ENCODE measurements at regions of chr15 and their contacts with region 1.

Region 1: GRCh38 chr15:52139599-52140491 is 27.3 kb upstream of the BCL2L10 start:
- DNase-seq: peak; percentile 80
- H3K4me3 Mint-ChIP-seq: no peak overlapping the region
- H3K27ac Mint-ChIP-seq: peak overlapping the region; percentile 91
- H3K4me1 Mint-ChIP-seq: peaks cover 23% of the 10 kb centered on the region
- H3K27me3 Mint-ChIP-seq: no peaks in the 10 kb centered on the region
- CTCF ChIP-seq: peak; percentile 83

Region 2: GRCh38 chr15:52093539-52094502 is 46.0 kb before region 1 on chr15:
- CTCF ChIA-PET with region 1: interaction called, 29 read pairs
- POLR2A ChIA-PET with region 1: interaction called, 5 read pairs
- intact Hi-C with region 1: loop called (anchors 2 kb)
- DNase-seq: peak; percentile 96
- H3K4me3 Mint-ChIP-seq: peak overlapping the region; percentile 48
- H3K27ac Mint-ChIP-seq: peak overlapping the region; percentile 99
- H3K4me1 Mint-ChIP-seq: peaks cover 34% of the 10 kb centered on the region
- H3K27me3 Mint-ChIP-seq: no peaks in the 10 kb centered on the region
- CTCF ChIP-seq: no peak

Region 3: DNA sequence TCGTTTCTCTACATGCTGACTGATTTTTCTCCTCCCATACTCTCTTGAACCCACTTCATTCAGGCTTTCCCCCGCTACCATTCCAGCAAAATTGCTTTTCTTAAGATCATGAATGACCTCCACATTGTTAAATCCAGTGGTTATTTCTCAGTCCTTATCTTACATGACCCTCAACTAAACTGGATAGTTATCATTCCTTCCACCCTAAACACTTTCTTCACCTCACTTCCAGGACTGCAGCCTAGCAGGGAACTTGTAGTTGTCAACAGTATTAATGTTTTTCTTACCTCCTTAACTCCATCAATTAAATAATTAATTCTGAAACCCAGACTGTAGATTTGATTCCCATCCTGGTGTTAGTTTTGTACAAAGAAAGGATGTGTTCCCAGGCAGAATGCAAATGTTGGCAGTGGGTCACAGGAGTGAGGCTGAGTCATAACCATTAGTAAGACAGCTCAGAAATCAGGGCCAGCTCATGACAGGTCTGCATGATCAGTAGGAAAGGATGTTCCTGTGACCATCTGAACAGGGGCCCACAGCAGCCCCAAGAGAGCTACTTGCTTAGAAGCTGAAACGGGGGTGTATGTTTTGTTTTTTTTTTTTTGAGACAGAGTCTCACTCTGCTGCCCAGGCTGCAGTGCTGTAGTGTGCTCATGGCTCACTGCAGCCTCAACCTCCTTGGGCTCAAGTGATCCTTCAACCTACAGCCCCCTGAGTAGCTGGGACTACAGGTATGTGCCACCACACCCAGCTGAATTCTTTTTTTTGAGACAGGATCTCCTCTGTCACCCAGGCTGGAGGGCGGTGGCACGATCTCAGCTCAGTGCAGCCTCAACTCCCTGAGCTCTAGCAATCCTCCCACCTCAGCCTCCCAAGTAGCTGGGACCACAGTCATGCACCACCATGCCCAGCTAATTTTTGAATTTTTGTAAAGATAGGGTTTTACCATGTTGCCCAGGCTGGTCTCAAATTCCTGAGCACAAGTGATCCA is 36.3 kb before region 1 on chr15:
- CTCF ChIA-PET with region 1: interaction called, 29 read pairs
- POLR2A ChIA-PET with region 1: interaction called, 5 read pairs
- intact Hi-C with region 1: no loop called
- DNase-seq: peak; percentile 95
- H3K4me3 Mint-ChIP-seq: peak overlapping the region; percentile 20
- H3K27ac Mint-ChIP-seq: peak overlapping the region; percentile 92
- H3K4me1 Mint-ChIP-seq: peaks cover 36% of the 10 kb centered on the region
- H3K27me3 Mint-ChIP-seq: no peaks in the 10 kb centered on the region
- CTCF ChIP-seq: no peak